ENCODE measurements at regions of chr16 and their contacts with region 1.

Region 1: GRCh38 chr16:3023669-3024478 is at the starts of genes HCFC1R1 and THOC6:
- DNase-seq: peak; percentile 88 to 98 (median 96)
- ATAC-seq: peak; percentile 73
- H3K4me3 ChIP-seq: peak within 1 kb of the TSS; percentile 88 to 90
- H3K4me3 Mint-ChIP-seq: peak within 1 kb of the TSS; percentile 95
- H3K27ac ChIP-seq: peak within 1 kb of the TSS; percentile 70 to 96
- H3K27ac Mint-ChIP-seq: peak within 1 kb of the TSS; percentile 95
- H3K4me1 ChIP-seq: peaks cover 65% of the 10 kb centered on the region
- H3K4me1 Mint-ChIP-seq: peaks cover 49% of the 10 kb centered on the region
- H3K27me3 ChIP-seq: peaks cover 0 to 3% of the 10 kb centered on the region in 2 experiments
- H3K27me3 Mint-ChIP-seq: peaks cover 3% of the 10 kb centered on the region
- CTCF ChIP-seq: no peak
- total RNA-seq, gene HCFC1R1: 6.4 to 7.1 TPM
- total RNA-seq, gene THOC6: 13.1 to 14.0 TPM

Region 2: GRCh38 chr16:2603165-2604015 is 420.5 kb before region 1 on chr16:
- CTCF ChIA-PET with region 1: no interaction called
- POLR2A ChIA-PET with region 1: no interaction called
- intact Hi-C with region 1: no loop called
- DNase-seq: peak; percentile 58 to 87 (median 77)
- ATAC-seq: peak; percentile 58
- H3K4me3 ChIP-seq: peak overlapping the region; percentile 64 to 76
- H3K4me3 Mint-ChIP-seq: peak overlapping the region; percentile 97
- H3K27ac ChIP-seq: peak overlapping the region; percentile 32 to 52
- H3K27ac Mint-ChIP-seq: peak overlapping the region; percentile 84
- H3K4me1 ChIP-seq: peaks cover 3% of the 10 kb centered on the region
- H3K4me1 Mint-ChIP-seq: peaks cover 29% of the 10 kb centered on the region
- H3K27me3 ChIP-seq: no peaks in the 10 kb centered on the region
- H3K27me3 Mint-ChIP-seq: no peaks in the 10 kb centered on the region
- CTCF ChIP-seq: no peak

Region 3: GRCh38 chr16:3003582-3004302 is 20.1 kb before region 1 on chr16:
- CTCF ChIA-PET with region 1: interaction called, 193 read pairs
- POLR2A ChIA-PET with region 1: interaction called, 18 read pairs
- intact Hi-C with region 1: loop called (anchors 1 kb)
- DNase-seq: peak; percentile 91 to 99 (median 95)
- ATAC-seq: peak; percentile 99
- H3K4me3 ChIP-seq: no peak overlapping the region
- H3K4me3 Mint-ChIP-seq: peak overlapping the region; percentile 81
- H3K27ac ChIP-seq: no peak overlapping the region
- H3K27ac Mint-ChIP-seq: no peak overlapping the region
- H3K4me1 ChIP-seq: peaks cover 21% of the 10 kb centered on the region
- H3K4me1 Mint-ChIP-seq: peaks cover 28% of the 10 kb centered on the region
- H3K27me3 ChIP-seq: peaks cover 0 to 4% of the 10 kb centered on the region in 2 experiments
- H3K27me3 Mint-ChIP-seq: no peaks in the 10 kb centered on the region
- CTCF ChIP-seq: peak; percentile 54

Region 4: DNA sequence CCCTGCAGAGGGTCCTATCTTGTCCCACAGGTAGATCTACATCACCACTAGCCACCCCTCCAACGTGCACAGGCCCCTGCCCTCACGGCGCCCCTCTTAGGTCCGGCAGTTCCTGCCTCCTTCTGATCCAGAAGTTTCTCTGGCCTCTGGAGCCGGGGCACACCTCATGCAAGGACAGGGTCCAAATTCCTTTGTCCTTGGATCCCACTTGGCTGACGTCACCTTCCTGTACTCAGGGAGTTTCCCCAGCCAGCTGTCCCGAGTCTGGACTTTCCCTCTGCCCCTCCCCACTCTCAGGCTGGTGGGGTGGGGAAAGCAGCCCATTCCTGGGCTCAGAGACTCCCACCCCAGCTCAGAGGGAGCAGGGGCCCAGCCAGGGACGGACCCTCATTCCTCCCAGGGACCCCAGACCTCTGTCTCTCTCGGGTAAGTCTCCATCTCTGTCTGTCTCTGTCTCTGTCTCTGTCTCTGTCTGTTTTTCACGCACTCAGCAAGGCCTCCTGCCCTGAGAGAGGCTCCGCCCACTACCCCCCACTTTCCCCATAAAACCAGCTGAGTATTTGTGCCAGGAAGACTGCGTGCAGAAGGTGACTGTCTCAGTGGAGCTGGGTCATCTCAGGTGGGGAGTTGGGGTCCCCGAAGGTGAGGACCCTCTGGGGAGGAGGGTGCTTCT is 41.3 kb after region 1 on chr16 and contains the start of gene IL32:
- CTCF ChIA-PET with region 1: interaction called, 33 read pairs
- POLR2A ChIA-PET with region 1: interaction called, 4 read pairs
- intact Hi-C with region 1: no loop called
- DNase-seq: peak in 8 of 9 experiments; percentile 57 to 92 (median 72)
- ATAC-seq: peak; percentile 43
- H3K4me3 ChIP-seq: peak within 1 kb of the TSS; percentile 97 to 100
- H3K4me3 Mint-ChIP-seq: peak within 1 kb of the TSS; percentile 97
- H3K27ac ChIP-seq: peak within 1 kb of the TSS; percentile 82 to 100
- H3K27ac Mint-ChIP-seq: peak within 1 kb of the TSS; percentile 97
- H3K4me1 ChIP-seq: peaks cover 48% of the 10 kb centered on the region
- H3K4me1 Mint-ChIP-seq: peaks cover 58% of the 10 kb centered on the region
- H3K27me3 ChIP-seq: no peaks in the 10 kb centered on the region
- H3K27me3 Mint-ChIP-seq: no peaks in the 10 kb centered on the region
- CTCF ChIP-seq: no peak
- total RNA-seq, gene IL32: 123 to 127 TPM

Region 5: GRCh38 chr16:3134564-3135417 is 110.9 kb after region 1 on chr16 and contains the start of gene ZNF213:
- CTCF ChIA-PET with region 1: interaction called, 184 read pairs
- POLR2A ChIA-PET with region 1: interaction called, 5 read pairs
- intact Hi-C with region 1: loop called in 1 of 2 experiments (anchors 1 kb)
- DNase-seq: peak; percentile 84 to 99 (median 92)
- ATAC-seq: peak; percentile 99
- H3K4me3 ChIP-seq: peak within 1 kb of the TSS; percentile 89 to 93
- H3K4me3 Mint-ChIP-seq: peak within 1 kb of the TSS; percentile 95
- H3K27ac ChIP-seq: peak within 1 kb of the TSS; percentile 94 to 95
- H3K27ac Mint-ChIP-seq: peak within 1 kb of the TSS; percentile 99
- H3K4me1 ChIP-seq: peaks cover 15% of the 10 kb centered on the region
- H3K4me1 Mint-ChIP-seq: peaks cover 29% of the 10 kb centered on the region
- H3K27me3 ChIP-seq: no peaks in the 10 kb centered on the region
- H3K27me3 Mint-ChIP-seq: no peaks in the 10 kb centered on the region
- CTCF ChIP-seq: peak; percentile 5
- total RNA-seq, gene ZNF213: 1.8 to 2.2 TPM